ENCODE measurements at regions of chr14 and their contacts with region 1.

Region 1: DNA sequence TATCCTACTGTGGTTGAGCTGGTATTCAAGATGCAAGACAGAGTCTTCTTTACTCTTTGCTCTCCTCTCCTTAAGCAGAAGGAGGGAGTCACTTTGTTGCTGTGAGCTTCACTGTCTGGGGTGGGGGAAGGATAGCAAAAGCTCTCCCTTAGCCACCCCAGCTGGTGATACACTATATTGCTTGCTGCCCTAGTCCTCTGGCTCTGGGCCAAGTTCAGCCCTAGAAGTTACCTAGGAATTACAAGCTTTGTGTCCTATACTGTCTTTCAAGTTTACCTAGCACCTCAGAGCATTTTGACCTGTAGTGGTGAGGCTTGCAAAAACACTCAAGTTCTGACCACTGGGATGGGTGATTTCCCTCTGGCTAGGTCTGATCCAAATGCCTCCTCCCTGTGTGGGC is 548.8 kb upstream of the FOXG1 start:
- DNase-seq: no peak
- H3K4me3 ChIP-seq: no peak overlapping the region
- H3K27ac ChIP-seq: no peak overlapping the region
- H3K4me1 ChIP-seq: no peaks in the 10 kb centered on the region
- H3K27me3 ChIP-seq: no peaks in the 10 kb centered on the region
- CTCF ChIP-seq: no peak

Region 2: GRCh38 chr14:28398506-28398905 is 180.8 kb after region 1 on chr14:
- CTCF ChIA-PET with region 1: interaction called, 20 read pairs
- dilution Hi-C with region 1: no loop called
- in situ Hi-C with region 1: no loop called
- intact Hi-C with region 1: no loop called
- DNase-seq: no peak
- H3K4me3 ChIP-seq: no peak overlapping the region
- H3K27ac ChIP-seq: no peak overlapping the region
- H3K4me1 ChIP-seq: no peaks in the 10 kb centered on the region
- H3K27me3 ChIP-seq: no peaks in the 10 kb centered on the region
- CTCF ChIP-seq: no peak